ENCODE measurements at regions of chr22 and their contacts with region 1.

Region 1: GRCh38 chr22:33302049-33302545 is 243.9 kb upstream of the SYN3 start:
- DNase-seq: peak; percentile 83
- ATAC-seq: peak; percentile 60
- H3K4me3 ChIP-seq: peak overlapping the region in 1 of 5 experiments; percentile 7
- H3K4me3 Mint-ChIP-seq: peak overlapping the region; percentile 51
- H3K27ac ChIP-seq: peak overlapping the region in 1 of 2 donors; percentile 16
- H3K27ac Mint-ChIP-seq: peak overlapping the region; percentile 88
- H3K4me1 ChIP-seq: peaks cover 64 to 76% of the 10 kb centered on the region in 2 donors
- H3K4me1 Mint-ChIP-seq: peaks cover 65% of the 10 kb centered on the region
- H3K27me3 ChIP-seq: no peaks in the 10 kb centered on the region
- H3K27me3 Mint-ChIP-seq: no peaks in the 10 kb centered on the region
- CTCF ChIP-seq: peak; percentile 98

Region 2: GRCh38 chr22:33018232-33018864 is 283.7 kb before region 1 on chr22:
- CTCF ChIA-PET with region 1: interaction called, 26 read pairs
- POLR2A ChIA-PET with region 1: no interaction called
- intact Hi-C with region 1: loop called (anchors 1 kb)
- DNase-seq: peak; percentile 69
- ATAC-seq: peak; percentile 67
- H3K4me3 ChIP-seq: no peak overlapping the region
- H3K4me3 Mint-ChIP-seq: no peak overlapping the region
- H3K27ac ChIP-seq: no peak overlapping the region
- H3K27ac Mint-ChIP-seq: no peak overlapping the region
- H3K4me1 ChIP-seq: peaks cover 3 to 15% of the 10 kb centered on the region in 2 donors
- H3K4me1 Mint-ChIP-seq: peaks cover 9% of the 10 kb centered on the region
- H3K27me3 ChIP-seq: no peaks in the 10 kb centered on the region
- H3K27me3 Mint-ChIP-seq: no peaks in the 10 kb centered on the region
- CTCF ChIP-seq: peak; percentile 94

Region 3: DNA sequence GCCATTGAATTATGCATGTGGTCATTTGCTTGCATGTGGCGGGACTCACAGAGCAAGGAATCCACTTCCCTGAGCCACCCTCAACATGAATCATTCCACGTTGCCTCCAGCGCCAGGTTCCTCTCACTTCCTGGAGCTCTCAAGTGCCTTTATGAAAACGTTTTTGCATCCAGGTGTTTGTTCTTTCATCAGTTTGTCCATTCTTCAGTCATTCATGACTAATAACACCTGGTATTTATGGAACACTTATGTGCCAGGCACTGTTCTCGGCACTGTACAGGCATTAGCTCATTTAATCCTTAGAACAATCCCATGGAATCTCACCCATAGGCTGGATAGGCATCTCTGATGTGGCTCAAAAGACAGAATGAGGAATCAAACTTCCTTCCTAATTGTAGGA is 12.2 kb after region 1 on chr22:
- CTCF ChIA-PET with region 1: interaction called, 10 read pairs
- POLR2A ChIA-PET with region 1: interaction called, 3 read pairs
- intact Hi-C with region 1: no loop called
- DNase-seq: no peak
- ATAC-seq: no peak
- H3K4me3 ChIP-seq: no peak overlapping the region
- H3K4me3 Mint-ChIP-seq: no peak overlapping the region
- H3K27ac ChIP-seq: no peak overlapping the region
- H3K27ac Mint-ChIP-seq: no peak overlapping the region
- H3K4me1 ChIP-seq: peaks cover 0 to 8% of the 10 kb centered on the region in 2 donors
- H3K4me1 Mint-ChIP-seq: peaks cover 12% of the 10 kb centered on the region
- H3K27me3 ChIP-seq: no peaks in the 10 kb centered on the region
- H3K27me3 Mint-ChIP-seq: no peaks in the 10 kb centered on the region
- CTCF ChIP-seq: no peak

Region 4: DNA sequence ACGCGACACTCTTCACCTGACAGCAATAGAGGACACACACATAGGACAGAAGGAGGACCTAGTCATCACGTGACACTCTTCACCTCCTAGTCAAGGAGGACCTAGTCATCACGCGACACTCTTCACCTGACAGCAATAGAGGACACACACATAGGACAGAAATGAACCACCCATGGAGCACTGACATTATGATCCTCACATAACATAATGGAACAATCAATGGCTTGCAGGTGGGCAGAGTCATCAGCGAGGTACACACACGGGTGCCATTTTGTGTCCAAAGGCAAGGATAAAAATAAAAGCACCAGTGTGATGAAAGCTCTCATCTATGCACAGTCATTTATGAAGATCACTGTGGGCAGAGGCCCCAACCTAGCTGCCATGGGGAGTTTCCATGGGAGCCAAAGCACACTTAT is 263.5 kb after region 1 on chr22:
- CTCF ChIA-PET with region 1: interaction called, 12 read pairs
- POLR2A ChIA-PET with region 1: interaction called, 10 read pairs
- intact Hi-C with region 1: loop called (anchors 1 kb)
- DNase-seq: no peak
- ATAC-seq: no peak
- H3K4me3 ChIP-seq: no peak overlapping the region
- H3K4me3 Mint-ChIP-seq: peak overlapping the region; percentile 18
- H3K27ac ChIP-seq: no peak overlapping the region
- H3K27ac Mint-ChIP-seq: peak overlapping the region; percentile 67
- H3K4me1 ChIP-seq: peaks cover 70 to 73% of the 10 kb centered on the region in 2 donors
- H3K4me1 Mint-ChIP-seq: peaks cover 72% of the 10 kb centered on the region
- H3K27me3 ChIP-seq: no peaks in the 10 kb centered on the region
- H3K27me3 Mint-ChIP-seq: no peaks in the 10 kb centered on the region
- CTCF ChIP-seq: no peak

Region 5: DNA sequence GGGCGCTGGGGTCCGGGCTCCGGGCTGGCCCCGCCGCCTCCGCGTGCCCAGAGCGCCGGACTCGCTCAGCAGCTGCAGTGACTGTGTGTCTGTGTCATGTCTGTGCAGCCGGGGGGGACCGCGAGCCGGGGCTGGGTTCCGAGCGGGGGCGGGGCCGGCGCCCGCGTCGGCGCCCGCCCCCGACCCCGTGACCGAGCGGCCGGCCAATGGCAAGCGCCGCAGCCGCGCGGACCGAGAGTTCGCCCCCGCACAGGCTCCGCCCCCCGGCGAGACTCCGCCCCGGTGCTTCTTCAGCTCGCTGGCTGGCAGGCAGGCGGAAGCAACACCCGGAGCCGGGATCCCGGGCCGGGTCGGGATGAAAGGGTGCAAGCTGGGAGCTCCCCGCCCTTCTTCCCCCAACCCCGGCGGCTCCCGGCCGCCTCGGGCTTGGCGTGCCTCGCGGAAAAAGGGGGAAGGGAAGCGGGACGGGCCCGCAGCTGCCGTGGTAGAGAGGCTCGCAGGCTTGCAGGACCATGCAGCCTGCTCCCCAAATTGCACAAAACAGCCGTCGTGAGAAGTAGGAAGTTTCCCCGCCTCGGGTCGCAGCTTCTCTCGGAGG is 618.9 kb after region 1 on chr22:
- CTCF ChIA-PET with region 1: interaction called, 54 read pairs
- POLR2A ChIA-PET with region 1: interaction called, 5 read pairs
- intact Hi-C with region 1: loop called (anchors 1 kb)
- DNase-seq: peak; percentile 97
- ATAC-seq: peak; percentile 87
- H3K4me3 ChIP-seq: peak overlapping the region; percentile 34 to 89 (median 70)
- H3K4me3 Mint-ChIP-seq: peak overlapping the region; percentile 92
- H3K27ac ChIP-seq: no peak overlapping the region
- H3K27ac Mint-ChIP-seq: peak overlapping the region; percentile 72
- H3K4me1 ChIP-seq: peaks cover 41 to 45% of the 10 kb centered on the region in 2 donors
- H3K4me1 Mint-ChIP-seq: peaks cover 48% of the 10 kb centered on the region
- H3K27me3 ChIP-seq: peaks cover 0 to 22% (median 3%) of the 10 kb centered on the region in 4 experiments
- H3K27me3 Mint-ChIP-seq: no peaks in the 10 kb centered on the region
- CTCF ChIP-seq: no peak

Region 6: GRCh38 chr22:34111210-34111824 is 809.2 kb after region 1 on chr22:
- CTCF ChIA-PET with region 1: interaction called, 94 read pairs
- POLR2A ChIA-PET with region 1: no interaction called
- intact Hi-C with region 1: loop called (anchors 1 kb)
- DNase-seq: peak; percentile 63
- ATAC-seq: peak; percentile 64
- H3K4me3 ChIP-seq: no peak overlapping the region
- H3K4me3 Mint-ChIP-seq: no peak overlapping the region
- H3K27ac ChIP-seq: no peak overlapping the region
- H3K27ac Mint-ChIP-seq: no peak overlapping the region
- H3K4me1 ChIP-seq: no peaks in the 10 kb centered on the region
- H3K4me1 Mint-ChIP-seq: no peaks in the 10 kb centered on the region
- H3K27me3 ChIP-seq: no peaks in the 10 kb centered on the region
- H3K27me3 Mint-ChIP-seq: peaks cover 12% of the 10 kb centered on the region
- CTCF ChIP-seq: peak; percentile 84

Measured in B cell (primary cell).